Dendritic cell treated with granulocyte-macrophage colony-stimulating factor and Interleukin-4, amounts not matched to agents 40 ng/mL and 50 ng/mL, for 4 days (primary cell): ENCODE measurements at regions of chr10 and their contacts with region 1.

Region 1: DNA sequence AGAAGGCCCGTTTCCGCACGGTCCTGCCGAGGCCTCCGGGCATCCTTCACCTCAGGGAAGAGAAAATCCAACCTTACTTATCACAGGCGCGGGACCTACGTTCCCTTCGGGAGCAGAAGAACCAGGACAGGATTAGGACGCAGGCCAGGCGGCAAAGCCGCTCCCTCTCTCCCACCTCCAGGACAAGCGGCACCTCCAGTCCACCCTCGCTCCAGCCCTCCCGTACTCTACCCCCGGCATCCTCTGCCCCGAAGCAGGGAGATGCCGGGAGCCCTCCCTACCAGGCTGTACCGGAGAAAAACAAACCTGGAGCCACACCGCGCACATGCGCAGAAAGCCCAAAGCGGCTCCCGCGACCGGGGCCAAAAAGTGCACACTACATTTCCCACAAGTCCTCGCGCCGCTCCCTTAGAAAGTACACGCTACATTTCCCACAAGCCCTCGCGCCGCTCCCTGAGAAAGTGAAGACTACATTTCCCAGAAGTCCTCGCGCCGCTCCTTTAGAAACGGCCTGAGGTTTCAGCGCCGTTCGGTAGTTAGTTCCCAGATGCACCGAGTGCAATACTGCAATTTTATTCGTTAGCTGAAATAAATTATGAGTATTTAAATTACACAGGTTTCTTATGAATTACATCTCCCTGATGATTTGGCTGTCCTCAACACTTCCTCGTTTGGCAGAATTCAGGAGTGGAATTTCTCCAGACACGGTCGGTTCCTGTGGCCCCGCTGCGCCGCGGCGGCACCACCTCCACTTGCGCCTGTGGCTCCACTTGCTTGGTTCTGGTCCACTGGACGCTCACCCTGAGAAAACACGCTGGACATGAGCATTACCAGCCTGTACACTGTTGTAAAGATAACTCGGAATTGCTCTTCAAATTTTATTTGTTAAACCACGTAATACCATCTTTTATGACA is 85.6 kb downstream of the ZNF33B start:
- H3K4me3 Mint-ChIP-seq: peak overlapping the region; percentile 98
- H3K27ac Mint-ChIP-seq: peak overlapping the region; percentile 85
- H3K4me1 Mint-ChIP-seq: peaks cover 20% of the 10 kb centered on the region
- H3K27me3 Mint-ChIP-seq: no peaks in the 10 kb centered on the region

Region 2: DNA sequence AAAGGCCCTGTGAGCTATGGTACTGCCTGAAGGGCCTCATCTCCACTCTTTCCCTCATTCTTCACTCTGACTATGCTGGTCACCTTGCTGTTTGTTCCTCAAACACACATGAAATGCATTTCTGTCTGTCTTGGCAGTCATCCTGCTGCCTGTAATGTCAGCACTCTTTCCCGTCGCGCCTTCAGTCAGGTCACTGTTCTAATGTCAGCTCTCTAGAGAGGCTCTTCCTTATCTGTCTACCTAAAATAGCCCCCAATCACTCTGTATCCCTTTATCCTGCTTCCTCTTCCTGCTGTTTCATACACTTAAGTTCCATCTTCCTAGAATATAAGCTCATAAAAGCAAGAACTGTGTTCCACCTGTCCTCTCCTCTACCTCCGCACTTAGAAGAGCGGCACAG is 129.8 kb before region 1 on chr10:
- intact Hi-C with region 1: no loop called
- H3K4me3 Mint-ChIP-seq: no peak overlapping the region
- H3K27ac Mint-ChIP-seq: no peak overlapping the region
- H3K4me1 Mint-ChIP-seq: no peaks in the 10 kb centered on the region
- H3K27me3 Mint-ChIP-seq: no peaks in the 10 kb centered on the region

Region 3: GRCh38 chr10:42638055-42638820 is 85.5 kb after region 1 on chr10 and contains the start of gene ZNF33B:
- intact Hi-C with region 1: loop called (anchors 1 kb)
- H3K4me3 Mint-ChIP-seq: peak within 1 kb of the TSS; percentile 90
- H3K27ac Mint-ChIP-seq: peak within 1 kb of the TSS; percentile 95
- H3K4me1 Mint-ChIP-seq: peaks cover 14% of the 10 kb centered on the region
- H3K27me3 Mint-ChIP-seq: no peaks in the 10 kb centered on the region

Region 4: GRCh38 chr10:42782446-42783180 is 229.9 kb after region 1 on chr10 and contains the start of gene BMS1:
- intact Hi-C with region 1: loop called (anchors 2 kb)
- H3K4me3 Mint-ChIP-seq: peak within 1 kb of the TSS; percentile 79
- H3K27ac Mint-ChIP-seq: peak within 1 kb of the TSS; percentile 86
- H3K4me1 Mint-ChIP-seq: peaks cover 6% of the 10 kb centered on the region
- H3K27me3 Mint-ChIP-seq: peaks cover 19% of the 10 kb centered on the region

Region 5: GRCh38 chr10:43648398-43649184 is 1095.8 kb after region 1 on chr10 and contains the start of gene ZNF32:
- intact Hi-C with region 1: loop called (anchors 2 kb)
- H3K4me3 Mint-ChIP-seq: peak within 1 kb of the TSS; percentile 84
- H3K27ac Mint-ChIP-seq: peak within 1 kb of the TSS; percentile 72
- H3K4me1 Mint-ChIP-seq: peaks cover 8% of the 10 kb centered on the region
- H3K27me3 Mint-ChIP-seq: peaks cover 17% of the 10 kb centered on the region